ENCODE measurements at regions of chr1 and their contacts with region 1.

Region 1: DNA sequence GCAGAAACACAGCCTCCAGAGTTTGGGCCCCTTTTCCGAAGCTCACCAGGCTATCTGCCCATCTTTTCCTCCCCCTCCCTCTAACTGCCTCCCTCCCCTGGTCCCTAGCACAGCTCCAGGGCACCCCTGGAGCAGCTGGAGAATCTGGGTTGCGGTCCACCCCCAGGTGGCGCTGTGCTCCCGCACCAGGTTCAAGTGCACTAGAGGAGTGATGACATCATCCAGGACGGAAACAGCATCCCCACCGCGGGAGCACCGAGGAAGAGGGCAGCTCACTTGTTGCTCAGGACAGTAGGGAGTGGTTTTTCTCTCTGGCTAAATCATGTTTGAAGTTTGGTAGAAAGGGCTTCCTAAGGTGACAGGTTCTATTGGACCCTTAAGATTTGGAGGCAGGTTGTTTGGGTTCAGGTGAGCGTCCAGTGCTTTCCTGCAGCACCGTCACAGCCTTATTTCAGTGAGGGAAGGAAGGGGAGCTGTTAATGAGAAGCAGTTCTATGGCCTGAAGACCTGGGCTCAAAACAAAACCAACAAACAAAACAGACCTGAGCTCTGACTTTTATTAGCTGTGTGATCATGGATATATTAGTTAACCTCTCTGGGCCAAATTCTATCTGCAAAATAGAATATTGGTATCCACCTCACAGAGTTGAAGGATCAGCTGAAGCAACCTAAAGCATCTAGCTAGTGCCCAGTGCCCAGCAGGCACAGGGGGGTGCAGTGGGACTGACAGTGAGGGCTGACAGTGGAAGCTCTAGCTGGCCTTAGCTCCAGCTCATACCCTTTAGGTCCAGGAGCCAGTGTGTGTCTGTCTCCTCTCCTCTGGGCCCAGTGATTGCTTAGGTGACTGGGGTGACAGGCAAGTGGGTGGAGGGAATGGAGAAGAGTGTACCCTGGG is 7.5 kb downstream of the SHISA4 start:
- DNase-seq: peak; percentile 92
- ATAC-seq: peak; percentile 97
- H3K4me3 Mint-ChIP-seq: peak overlapping the region; percentile 25
- H3K27ac Mint-ChIP-seq: peak overlapping the region; percentile 80
- H3K4me1 Mint-ChIP-seq: peaks cover 12% of the 10 kb centered on the region
- H3K27me3 Mint-ChIP-seq: peaks cover 19% of the 10 kb centered on the region

Region 2: GRCh38 chr1:201925981-201926645 is 30.0 kb after region 1 on chr1:
- CTCF ChIA-PET with region 1: interaction called, 10 read pairs
- DNase-seq: no peak
- ATAC-seq: no peak
- H3K4me3 Mint-ChIP-seq: no peak overlapping the region
- H3K27ac Mint-ChIP-seq: no peak overlapping the region
- H3K4me1 Mint-ChIP-seq: no peaks in the 10 kb centered on the region
- H3K27me3 Mint-ChIP-seq: peaks cover 34% of the 10 kb centered on the region

Region 3: DNA sequence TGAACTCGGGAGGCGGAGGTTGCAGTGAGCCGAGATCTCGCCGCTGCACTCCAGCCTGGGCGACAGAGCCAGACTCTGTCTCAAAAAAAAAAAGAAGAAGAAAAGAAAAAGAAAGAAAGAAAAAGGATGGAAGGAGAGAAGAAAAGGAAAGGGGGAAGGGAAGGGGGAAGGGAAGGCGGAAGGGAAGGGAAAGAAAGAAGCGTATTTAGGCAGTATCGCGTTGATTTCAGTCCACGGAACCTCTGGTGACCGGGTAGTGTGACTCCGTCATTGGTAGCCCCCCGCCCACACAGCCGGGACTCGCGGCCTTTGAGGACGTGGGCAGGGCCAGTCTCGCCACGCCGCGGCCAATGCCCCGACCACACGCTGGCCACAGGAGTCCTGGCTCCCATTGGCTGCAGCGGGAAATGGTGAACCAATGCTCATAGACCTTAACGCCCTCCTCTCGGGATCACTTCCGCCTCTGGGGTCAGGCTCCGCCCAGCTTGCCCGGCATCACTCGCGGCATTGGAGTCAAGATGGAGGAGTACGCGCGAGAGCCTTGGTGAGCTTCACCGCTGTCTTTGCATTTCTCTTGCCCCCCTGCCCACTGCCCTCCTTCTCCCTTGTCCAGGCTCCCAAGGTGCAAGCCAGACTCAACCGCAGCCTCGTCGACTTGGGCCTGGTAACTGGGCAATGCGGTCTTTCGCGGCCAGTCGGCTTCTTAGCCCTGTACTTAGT is 59.0 kb after region 1 on chr1 and contains the start of gene TIMM17A:
- CTCF ChIA-PET with region 1: interaction called, 37 read pairs
- DNase-seq: peak; percentile 98
- ATAC-seq: peak; percentile 99
- H3K4me3 Mint-ChIP-seq: peak within 1 kb of the TSS; percentile 97
- H3K27ac Mint-ChIP-seq: peak within 1 kb of the TSS; percentile 94
- H3K4me1 Mint-ChIP-seq: peaks cover 17% of the 10 kb centered on the region
- H3K27me3 Mint-ChIP-seq: peaks cover 3% of the 10 kb centered on the region
- total RNA-seq, gene TIMM17A: 43.0 to 68.7 TPM

Region 4: GRCh38 chr1:201970334-201971159 is 74.4 kb after region 1 on chr1:
- CTCF ChIA-PET with region 1: interaction called, 157 read pairs
- DNase-seq: no peak
- ATAC-seq: no peak
- H3K4me3 Mint-ChIP-seq: no peak overlapping the region
- H3K27ac Mint-ChIP-seq: no peak overlapping the region
- H3K4me1 Mint-ChIP-seq: peaks cover 7% of the 10 kb centered on the region
- H3K27me3 Mint-ChIP-seq: peaks cover 12% of the 10 kb centered on the region

Region 5: DNA sequence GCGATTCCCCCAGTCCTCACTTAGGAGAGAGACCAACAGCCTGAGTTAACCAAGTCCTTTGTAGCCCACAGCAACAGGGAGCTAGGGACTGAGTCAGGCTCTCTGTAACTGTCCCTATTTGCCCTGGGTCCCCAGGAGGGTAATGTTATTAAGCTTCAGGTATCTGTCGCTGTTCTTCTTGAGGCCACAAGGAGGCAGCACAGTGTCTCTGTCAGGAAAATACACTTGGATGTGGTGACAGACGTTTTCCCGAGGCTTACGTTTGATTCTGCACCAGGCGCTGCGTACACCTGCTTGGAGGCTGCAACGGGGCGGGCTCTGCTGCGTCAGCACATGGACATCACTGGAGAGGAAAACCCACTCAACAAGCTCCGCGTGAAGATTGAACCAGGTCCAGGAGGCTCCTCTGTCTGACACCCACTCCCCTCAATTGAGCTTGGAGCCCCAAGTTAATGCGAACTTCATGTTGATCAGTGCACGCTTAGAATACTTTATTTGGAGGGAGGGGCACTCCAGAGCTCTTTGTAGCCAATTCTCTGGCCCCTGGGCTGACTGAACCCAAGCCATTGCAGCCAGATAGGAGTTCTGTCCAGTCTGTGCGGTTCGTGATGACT is 103.6 kb after region 1 on chr1:
- CTCF ChIA-PET with region 1: interaction called, 27 read pairs
- DNase-seq: peak; percentile 44
- ATAC-seq: peak; percentile 68
- H3K4me3 Mint-ChIP-seq: no peak overlapping the region
- H3K27ac Mint-ChIP-seq: no peak overlapping the region
- H3K4me1 Mint-ChIP-seq: no peaks in the 10 kb centered on the region
- H3K27me3 Mint-ChIP-seq: no peaks in the 10 kb centered on the region

Region 6: DNA sequence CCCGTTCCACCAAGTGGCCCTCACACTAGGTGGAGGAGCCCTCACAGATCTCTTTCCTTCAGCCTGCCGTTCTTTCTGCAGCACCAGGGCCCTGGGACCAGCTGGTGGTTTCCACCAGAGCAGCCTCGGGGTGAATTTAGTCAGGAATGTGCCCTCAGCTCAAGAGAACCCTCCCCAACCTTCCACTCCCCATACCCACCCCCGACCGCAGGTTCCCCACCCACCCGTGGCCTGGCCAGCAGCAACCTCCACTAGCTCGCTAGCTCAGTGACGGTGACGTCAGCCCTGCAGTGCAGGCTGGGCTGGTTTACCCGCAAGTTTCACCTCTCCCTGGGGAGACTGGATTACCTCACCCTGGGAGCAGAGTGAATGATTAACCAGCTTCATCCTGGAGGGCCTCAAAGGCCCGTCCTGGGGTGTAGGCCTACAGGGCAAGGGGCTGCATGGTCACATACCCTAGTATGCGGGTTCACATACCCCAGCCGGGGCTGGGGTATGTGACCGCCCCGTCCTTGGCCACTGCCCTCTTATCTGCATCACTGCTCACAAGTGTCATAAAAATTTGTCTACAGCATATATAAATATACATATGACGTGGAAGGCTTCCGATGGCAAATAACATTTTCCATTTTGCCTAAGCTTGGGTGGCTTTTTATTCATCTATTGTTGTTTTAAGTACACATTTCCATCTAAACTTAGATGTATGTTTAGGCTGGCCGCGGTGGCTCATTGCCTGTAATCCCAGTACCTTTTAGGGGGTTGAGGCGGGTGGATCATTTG is 138.7 kb after region 1 on chr1:
- CTCF ChIA-PET with region 1: no interaction called
- DNase-seq: no peak
- ATAC-seq: peak; percentile 57
- H3K4me3 Mint-ChIP-seq: no peak overlapping the region
- H3K27ac Mint-ChIP-seq: no peak overlapping the region
- H3K4me1 Mint-ChIP-seq: no peaks in the 10 kb centered on the region
- H3K27me3 Mint-ChIP-seq: peaks cover 6% of the 10 kb centered on the region

Region 7: GRCh38 chr1:202063100-202063499 is 166.9 kb after region 1 on chr1:
- CTCF ChIA-PET with region 1: no interaction called
- DNase-seq: no peak
- ATAC-seq: no peak
- H3K4me3 Mint-ChIP-seq: no peak overlapping the region
- H3K27ac Mint-ChIP-seq: no peak overlapping the region
- H3K4me1 Mint-ChIP-seq: no peaks in the 10 kb centered on the region
- H3K27me3 Mint-ChIP-seq: peaks cover 16% of the 10 kb centered on the region

Measured in activated CD8-positive, alpha-beta memory T cell treated with anti-CD3 and anti-CD28 coated beads, Interleukin-2, amount 10 ng/mL, durations not matched to agents 7 days and 5 days (primary cell).